ENCODE measurements at regions of chr7 and their contacts with region 1.

Region 1: DNA sequence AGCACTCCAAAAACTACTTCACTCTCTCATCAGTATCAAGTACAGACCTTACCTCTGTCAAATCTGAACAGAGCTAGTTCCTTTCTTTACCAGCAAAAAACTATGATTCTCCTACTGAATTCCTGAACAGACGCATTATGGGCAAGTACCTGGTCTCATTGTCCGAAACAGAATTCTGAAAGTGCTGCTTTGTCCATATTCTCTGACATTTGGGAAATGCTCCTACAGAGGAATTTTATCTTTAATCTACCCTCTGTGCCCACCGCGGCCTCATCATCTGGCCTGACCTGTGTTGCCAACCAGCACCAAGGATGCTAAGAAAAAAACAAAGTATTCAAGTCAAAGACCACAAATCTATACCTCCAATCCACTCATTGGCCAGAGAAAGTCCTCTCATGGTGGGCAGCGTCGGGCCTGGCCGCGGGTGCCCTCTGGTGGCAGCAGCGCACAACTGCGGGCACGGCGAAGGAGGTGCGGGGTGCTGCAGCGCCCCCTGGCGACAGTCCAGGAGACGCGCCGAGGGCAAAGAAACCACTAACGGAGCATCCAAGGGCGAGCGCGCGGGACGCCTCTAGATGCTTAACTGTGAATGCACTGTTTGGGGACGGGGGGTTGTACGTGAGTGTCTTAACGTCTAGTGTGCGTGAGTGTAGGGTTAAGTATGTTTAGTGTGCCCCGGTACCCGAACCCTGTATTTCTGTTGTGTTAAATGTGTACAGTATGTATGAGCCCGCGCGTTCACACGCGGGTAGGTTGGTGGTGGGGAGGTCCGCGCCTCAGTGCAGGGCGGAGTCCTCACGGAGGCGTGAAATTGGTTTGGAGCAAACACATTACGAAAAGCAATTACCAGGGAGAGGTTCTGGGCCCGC is 5.0 kb upstream of the GBX1 start:
- DNase-seq: peak; percentile 88
- ATAC-seq: peak; percentile 83

Region 2: DNA sequence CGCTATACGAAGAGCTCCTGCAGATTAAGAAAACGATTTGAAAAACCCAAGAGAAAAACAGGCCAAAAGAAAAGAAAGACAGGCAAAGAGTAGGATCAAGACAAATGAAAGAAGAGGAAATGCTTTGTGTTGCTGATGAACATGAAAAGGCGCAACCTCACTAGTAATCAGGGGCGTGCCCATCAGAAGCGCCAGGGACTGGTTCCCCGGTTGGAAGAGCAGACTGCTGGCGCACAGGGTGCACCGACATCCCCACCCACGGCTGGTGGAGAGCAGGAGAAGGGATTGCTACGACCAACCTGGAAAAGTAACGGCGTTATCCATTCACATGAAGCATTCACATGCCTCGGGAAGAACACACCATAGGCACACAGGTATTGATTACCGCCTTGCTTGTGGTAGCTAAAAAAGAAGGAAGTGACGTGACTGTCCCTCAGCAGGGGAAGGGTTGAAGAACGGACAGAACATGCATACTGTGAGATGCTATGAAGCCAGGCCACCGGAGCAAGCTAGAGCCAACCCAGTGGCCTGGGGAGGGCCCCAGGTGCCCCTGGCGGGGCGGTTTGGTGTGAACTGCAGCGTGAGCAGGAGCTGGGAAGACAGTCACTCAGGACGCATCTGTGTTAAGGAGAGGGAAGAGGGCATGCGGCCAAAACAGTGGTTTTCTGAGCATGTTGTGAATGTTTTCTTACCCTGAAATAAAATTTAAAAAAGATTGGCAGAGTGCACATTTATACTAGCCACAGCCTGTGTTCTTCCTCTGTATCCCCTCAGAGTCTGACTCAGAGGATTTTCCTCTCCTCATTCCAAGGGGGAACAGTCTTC is 67.9 kb before region 1 on chr7:
- intact Hi-C with region 1: no loop called
- DNase-seq: peak; percentile 83
- ATAC-seq: peak; percentile 34

Region 3: DNA sequence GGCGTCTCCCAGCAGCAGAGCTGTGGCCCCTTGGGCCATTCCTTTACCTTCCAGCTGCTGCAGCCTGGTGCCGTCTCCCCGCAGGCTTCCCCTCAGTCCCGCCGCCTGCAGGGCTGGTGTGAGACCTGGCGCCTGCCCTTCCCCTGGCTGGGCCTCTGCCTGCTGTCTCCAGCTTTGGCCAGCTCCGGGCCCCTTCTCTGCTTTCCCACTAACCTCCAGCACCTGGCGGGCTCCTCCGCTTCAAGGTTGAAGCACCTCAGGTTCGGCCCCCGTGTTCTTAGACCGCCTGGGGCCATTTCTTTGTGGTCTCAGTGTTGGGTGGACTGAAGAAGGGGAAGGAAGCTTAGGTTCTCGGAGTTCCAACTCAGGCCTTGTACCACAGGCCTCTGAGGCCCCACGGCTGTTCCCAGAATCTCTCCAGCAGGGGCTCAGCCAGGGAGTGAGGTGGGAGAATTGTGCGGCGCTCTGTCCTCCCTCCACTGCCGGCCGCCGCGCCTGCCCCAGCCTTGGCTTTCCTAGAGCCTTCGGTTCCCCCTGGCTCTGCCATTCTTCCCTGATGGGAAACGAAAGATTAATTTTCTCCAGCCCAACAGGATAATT is 35.3 kb before region 1 on chr7:
- intact Hi-C with region 1: loop called (anchors 5 kb)
- DNase-seq: peak; percentile 36
- ATAC-seq: no peak

Measured in sciatic nerve (tissue), 2 donors.